ENCODE measurements at regions of chr3 and their contacts with region 1.

Region 1: GRCh38 chr3:14319654-14320182 is 82.7 kb upstream of the SLC6A6 start:
- DNase-seq: peak in 1 of 2 donors; percentile 58
- ATAC-seq: peak in 1 of 2 donors; percentile 16
- H3K4me3 ChIP-seq: no peak overlapping the region
- H3K27ac ChIP-seq: peak overlapping the region; percentile 78 to 95 (median 88)
- H3K4me1 ChIP-seq: peaks cover 30 to 35% of the 10 kb centered on the region in 2 donors
- H3K27me3 ChIP-seq: no peaks in the 10 kb centered on the region
- CTCF ChIP-seq: no peak
- POLR2A ChIP-seq: no peak

Region 2: GRCh38 chr3:14301558-14301957 is 18.2 kb before region 1 on chr3:
- in situ Hi-C with region 1: no loop called
- intact Hi-C with region 1: loop called (anchors 1 kb)
- DNase-seq: peak; percentile 91 to 98
- ATAC-seq: peak; percentile 73 to 80
- H3K4me3 ChIP-seq: no peak overlapping the region
- H3K27ac ChIP-seq: peak overlapping the region; percentile 80 to 87 (median 83)
- H3K4me1 ChIP-seq: peaks cover 41 to 50% of the 10 kb centered on the region in 2 donors
- H3K27me3 ChIP-seq: no peaks in the 10 kb centered on the region
- CTCF ChIP-seq: no peak
- POLR2A ChIP-seq: peak; percentile 62 to 66

Region 3: GRCh38 chr3:14345308-14346150 is 25.8 kb after region 1 on chr3:
- in situ Hi-C with region 1: no loop called
- intact Hi-C with region 1: no loop called
- DNase-seq: no peak
- ATAC-seq: peak in 1 of 2 donors; percentile 8
- H3K4me3 ChIP-seq: no peak overlapping the region
- H3K27ac ChIP-seq: no peak overlapping the region
- H3K4me1 ChIP-seq: no peaks in the 10 kb centered on the region
- H3K27me3 ChIP-seq: peaks cover 0 to 4% (median 0%) of the 10 kb centered on the region in 3 donors
- CTCF ChIP-seq: no peak
- POLR2A ChIP-seq: no peak

Region 4: DNA sequence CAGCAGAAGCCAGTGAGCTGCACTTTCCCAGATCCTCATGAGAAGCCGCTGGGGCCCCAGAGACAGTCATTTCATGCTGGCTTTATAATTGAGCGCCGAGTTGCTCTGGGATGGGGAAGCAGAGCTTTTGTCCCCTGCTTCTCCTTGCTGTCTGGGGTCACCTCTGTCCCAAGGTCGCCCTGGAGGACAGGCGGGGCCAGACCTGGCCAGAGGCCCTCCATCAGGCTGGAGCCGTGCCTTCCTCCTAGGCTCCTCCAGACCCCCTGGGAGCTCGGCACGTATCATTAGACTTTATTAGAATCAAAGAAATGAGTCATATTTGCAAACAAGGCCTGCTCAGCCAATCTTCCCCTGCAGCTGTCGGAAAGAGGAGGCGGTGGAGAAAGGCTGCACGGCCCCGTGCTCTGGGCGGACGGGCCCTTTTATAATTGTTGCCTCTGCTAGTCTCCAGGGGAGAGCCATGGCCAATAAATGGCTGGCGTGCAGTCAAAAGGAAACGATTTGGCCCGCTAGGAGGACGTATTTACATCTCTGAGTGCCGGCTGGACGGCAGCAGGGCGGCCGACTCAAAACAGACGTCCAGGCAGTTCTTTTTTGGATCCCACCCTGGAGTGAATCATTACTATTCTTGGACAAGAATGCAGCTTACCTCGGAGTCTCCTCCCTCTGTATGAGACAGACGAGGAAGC is 133.1 kb after region 1 on chr3:
- in situ Hi-C with region 1: no loop called
- intact Hi-C with region 1: loop called (anchors 5 kb)
- DNase-seq: peak; percentile 77 to 92
- ATAC-seq: peak; percentile 67 to 71
- H3K4me3 ChIP-seq: peak overlapping the region in 1 of 4 donors; percentile 19
- H3K27ac ChIP-seq: peak overlapping the region; percentile 83 to 93 (median 88)
- H3K4me1 ChIP-seq: peaks cover 45% of the 10 kb centered on the region in 2 donors
- H3K27me3 ChIP-seq: no peaks in the 10 kb centered on the region
- CTCF ChIP-seq: peak in 2 of 5 experiments; percentile 7 to 24
- POLR2A ChIP-seq: peak; percentile 15 to 24

Region 5: DNA sequence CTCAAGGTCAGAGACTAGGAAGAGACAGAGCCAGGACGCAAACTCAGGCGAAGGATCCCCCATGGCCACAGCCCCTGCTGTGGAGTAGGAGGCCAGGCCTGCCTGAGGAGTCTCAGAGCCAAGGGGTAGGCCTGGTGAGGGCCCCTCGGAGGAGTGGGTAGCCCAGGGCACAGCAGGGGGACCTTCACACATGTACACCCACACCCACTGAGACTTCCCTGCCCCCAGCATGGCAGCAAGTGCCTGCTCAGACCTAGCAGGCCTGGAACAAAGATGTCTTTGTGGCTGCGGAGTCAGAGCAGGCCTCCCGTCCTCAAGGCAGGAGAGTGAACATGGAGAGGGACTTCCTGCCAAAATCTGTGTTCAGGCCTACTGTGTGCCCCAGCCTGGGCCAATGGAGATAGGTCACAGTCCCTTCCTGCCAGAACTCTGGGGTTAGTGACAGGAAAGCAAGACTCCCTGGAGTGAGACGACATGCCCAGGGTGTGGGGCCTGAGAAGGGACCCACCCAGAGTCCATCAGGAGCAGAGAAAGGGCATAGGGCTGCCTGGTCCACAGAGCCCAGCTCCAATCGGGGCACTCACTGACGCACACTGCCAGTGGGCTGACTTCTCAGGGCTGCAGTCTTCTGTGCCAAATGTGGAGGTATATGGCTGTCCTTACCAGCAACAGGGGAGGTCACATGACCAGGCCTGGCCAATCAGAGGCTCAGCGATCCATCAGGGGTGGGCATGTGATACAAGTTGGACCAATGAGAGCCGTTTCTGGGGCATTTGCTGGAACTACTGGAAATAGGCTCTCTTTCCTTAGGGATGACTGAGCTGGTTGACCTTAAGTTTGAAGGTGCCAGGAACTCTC is 218.1 kb after region 1 on chr3:
- in situ Hi-C with region 1: no loop called
- intact Hi-C with region 1: loop called (anchors 5 kb)
- DNase-seq: peak; percentile 61 to 93
- ATAC-seq: peak; percentile 25 to 49
- H3K4me3 ChIP-seq: peak overlapping the region; percentile 0 to 22 (median 21)
- H3K27ac ChIP-seq: peak overlapping the region; percentile 94 to 97 (median 94)
- H3K4me1 ChIP-seq: peaks cover 80 to 82% of the 10 kb centered on the region in 2 donors
- H3K27me3 ChIP-seq: no peaks in the 10 kb centered on the region
- CTCF ChIP-seq: no peak
- POLR2A ChIP-seq: peak; percentile 21 to 26